ENCODE measurements at regions of chr14 and their contacts with region 1.

Region 1: DNA sequence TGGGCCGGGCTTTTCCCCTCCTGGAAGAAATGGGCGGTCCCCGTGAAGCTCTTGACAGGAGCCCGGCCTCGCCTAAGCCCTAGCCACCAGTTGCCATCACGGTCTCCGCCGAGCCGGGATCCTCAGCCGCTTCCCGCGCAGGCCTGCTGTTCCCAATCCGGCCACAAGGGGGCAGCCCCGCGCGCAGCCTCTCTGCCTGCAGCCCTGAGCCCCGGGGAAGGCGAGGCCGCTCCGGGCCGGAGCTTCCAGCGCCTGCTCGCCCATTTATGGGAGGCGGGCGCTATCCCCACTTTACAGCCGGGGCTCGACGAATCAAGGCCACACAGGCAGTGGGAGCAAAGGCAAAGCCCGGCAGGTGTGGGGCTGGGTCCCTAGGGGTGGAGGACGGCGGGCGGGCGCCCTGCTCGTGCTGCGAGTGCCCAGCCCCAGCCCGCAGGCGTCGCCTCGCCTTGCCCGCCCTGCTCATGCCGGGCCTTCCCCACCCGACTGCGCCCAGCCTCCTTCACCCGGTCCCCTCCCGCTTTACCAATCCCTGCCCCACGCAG is 61.5 kb downstream of the LGMN start:
- DNase-seq: peak; percentile 82
- H3K4me3 ChIP-seq: peak overlapping the region in 3 of 4 donors; percentile 5 to 33 (median 24)
- H3K27ac ChIP-seq: peak overlapping the region in 3 of 4 donors; percentile 26 to 44 (median 39)
- H3K4me1 ChIP-seq: peaks cover 7 to 27% (median 17%) of the 10 kb centered on the region in 4 donors
- H3K27me3 ChIP-seq: no peaks in the 10 kb centered on the region
- CTCF ChIP-seq: peak; percentile 90 to 99 (median 94)
- EP300 ChIP-seq: no peak
- POLR2A ChIP-seq: no peak

Region 2: GRCh38 chr14:92135267-92135666 is 551.7 kb before region 1 on chr14:
- in situ Hi-C with region 1: loop called in 3 of 4 experiments (anchors 25 kb)
- intact Hi-C with region 1: no loop called
- DNase-seq: no peak
- H3K4me3 ChIP-seq: no peak overlapping the region
- H3K27ac ChIP-seq: no peak overlapping the region
- H3K4me1 ChIP-seq: no peaks in the 10 kb centered on the region
- H3K27me3 ChIP-seq: no peaks in the 10 kb centered on the region
- CTCF ChIP-seq: peak; percentile 36 to 53 (median 49)
- EP300 ChIP-seq: no peak
- POLR2A ChIP-seq: no peak

Region 3: DNA sequence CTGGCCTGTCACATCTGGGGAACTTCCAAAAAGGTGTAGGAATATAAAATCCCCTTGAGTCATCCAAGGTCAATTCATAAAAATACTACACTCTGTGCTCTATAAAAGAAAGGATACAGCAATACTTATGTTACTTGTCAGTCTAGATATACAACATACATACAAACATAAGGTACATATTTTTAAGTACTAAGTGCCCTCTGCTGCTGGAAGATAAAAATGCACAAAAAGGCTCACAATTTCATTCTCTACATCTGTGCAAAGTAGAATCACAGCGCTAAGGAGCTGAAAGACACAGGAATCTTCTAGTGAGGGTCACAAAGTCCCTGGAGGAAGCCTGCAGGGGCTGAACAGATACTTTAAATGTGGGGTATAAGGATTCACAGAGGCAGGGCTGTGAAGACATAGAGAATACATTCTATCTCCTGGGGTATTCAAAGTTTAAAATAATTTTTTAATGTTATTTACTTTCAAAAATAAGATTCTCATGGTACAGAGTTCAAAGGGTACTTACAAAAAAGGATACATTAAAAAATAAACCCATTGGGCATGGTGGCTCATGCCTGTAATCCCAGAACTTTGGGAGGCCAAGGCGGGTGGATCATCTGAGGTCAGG is 97.0 kb after region 1 on chr14:
- in situ Hi-C with region 1: loop called in 1 of 4 experiments (anchors 25 kb)
- intact Hi-C with region 1: loop called (anchors 5 kb)
- DNase-seq: peak; percentile 29
- H3K4me3 ChIP-seq: no peak overlapping the region
- H3K27ac ChIP-seq: no peak overlapping the region
- H3K4me1 ChIP-seq: peaks cover 0 to 11% (median 0%) of the 10 kb centered on the region in 4 donors
- H3K27me3 ChIP-seq: no peaks in the 10 kb centered on the region
- CTCF ChIP-seq: peak; percentile 57 to 81 (median 65)
- EP300 ChIP-seq: no peak
- POLR2A ChIP-seq: no peak

Region 4: GRCh38 chr14:92793709-92794546 is 107.0 kb after region 1 on chr14 and contains the start of gene GOLGA5:
- in situ Hi-C with region 1: loop called in 1 of 4 experiments (anchors 25 kb)
- intact Hi-C with region 1: no loop called
- DNase-seq: peak; percentile 99
- H3K4me3 ChIP-seq: peak within 1 kb of the TSS; percentile 88 to 99 (median 92)
- H3K27ac ChIP-seq: peak within 1 kb of the TSS; percentile 89 to 96 (median 92)
- H3K4me1 ChIP-seq: peaks cover 8 to 28% (median 20%) of the 10 kb centered on the region in 4 donors
- H3K27me3 ChIP-seq: no peaks in the 10 kb centered on the region
- CTCF ChIP-seq: peak in 1 of 5 experiments; percentile 57
- EP300 ChIP-seq: no peak
- POLR2A ChIP-seq: peak; percentile 83
- total RNA-seq, gene GOLGA5: 15.9 to 38.1 (median 30.3) TPM

Region 5: GRCh38 chr14:93426750-93427149 is 739.8 kb after region 1 on chr14:
- in situ Hi-C with region 1: no loop called
- intact Hi-C with region 1: no loop called
- DNase-seq: no peak
- H3K4me3 ChIP-seq: no peak overlapping the region
- H3K27ac ChIP-seq: no peak overlapping the region
- H3K4me1 ChIP-seq: peaks cover 0 to 2% (median 0%) of the 10 kb centered on the region in 4 donors
- H3K27me3 ChIP-seq: peaks cover 36% of the 10 kb centered on the region
- CTCF ChIP-seq: no peak
- EP300 ChIP-seq: no peak
- POLR2A ChIP-seq: no peak

Measured in transverse colon (tissue), 4 donors.